ENCODE measurements at regions of chr17 and their contacts with region 1.

Region 1: GRCh38 chr17:75046582-75047289 is at the starts of genes ATP5PD and KCTD2:
- DNase-seq: peak; percentile 92 to 95 (median 94)
- H3K4me3 ChIP-seq: peak within 1 kb of the TSS; percentile 62 to 96
- H3K4me3 Mint-ChIP-seq: peak within 1 kb of the TSS; percentile 95 to 100 (median 97)
- H3K27ac ChIP-seq: peak within 1 kb of the TSS; percentile 85
- H3K27ac Mint-ChIP-seq: peak within 1 kb of the TSS; percentile 96 to 98 (median 97)
- H3K4me1 ChIP-seq: peaks cover 30% of the 10 kb centered on the region
- H3K4me1 Mint-ChIP-seq: peaks cover 25 to 63% (median 40%) of the 10 kb centered on the region in 4 donors
- H3K27me3 ChIP-seq: no peaks in the 10 kb centered on the region
- H3K27me3 Mint-ChIP-seq: no peaks in the 10 kb centered on the region
- total RNA-seq, gene ATP5PD: 167 to 171 TPM
- total RNA-seq, gene KCTD2: 31.1 to 31.7 TPM

Region 2: DNA sequence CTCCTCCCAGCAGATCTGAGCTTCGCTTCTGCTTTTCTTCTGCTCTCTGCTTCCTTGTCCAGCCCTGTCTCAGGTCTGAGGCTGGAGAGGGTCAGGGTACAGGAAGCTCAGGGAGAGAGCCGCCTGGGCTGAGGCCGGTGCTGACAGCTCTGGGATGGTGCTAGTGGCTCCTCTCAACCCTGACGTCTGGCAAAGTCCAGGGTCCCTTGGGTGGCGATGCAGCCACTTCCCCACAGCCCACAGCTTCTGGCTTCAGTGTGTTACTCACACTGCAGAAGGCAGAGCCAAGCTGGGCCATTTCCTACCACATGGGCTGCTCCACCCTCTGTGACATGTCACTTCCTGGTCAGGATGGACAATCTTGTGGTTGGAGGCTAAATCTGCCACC is 500.9 kb before region 1 on chr17 and contains the start of gene CD300C:
- CTCF ChIA-PET with region 1: no interaction called
- POLR2A ChIA-PET with region 1: no interaction called
- intact Hi-C with region 1: no loop called
- DNase-seq: no peak
- H3K4me3 ChIP-seq: no peak within 1 kb of the TSS
- H3K4me3 Mint-ChIP-seq: no peak within 1 kb of the TSS
- H3K27ac ChIP-seq: no peak within 1 kb of the TSS
- H3K27ac Mint-ChIP-seq: peak within 1 kb of the TSS in 2 of 7 donors; percentile 51 to 64
- H3K4me1 ChIP-seq: no peaks in the 10 kb centered on the region
- H3K4me1 Mint-ChIP-seq: peaks cover 0 to 8% (median 4%) of the 10 kb centered on the region in 4 donors
- H3K27me3 ChIP-seq: no peaks in the 10 kb centered on the region
- H3K27me3 Mint-ChIP-seq: peaks cover 2 to 3% of the 10 kb centered on the region in 2 donors
- total RNA-seq, gene CD300C: not detected

Region 3: DNA sequence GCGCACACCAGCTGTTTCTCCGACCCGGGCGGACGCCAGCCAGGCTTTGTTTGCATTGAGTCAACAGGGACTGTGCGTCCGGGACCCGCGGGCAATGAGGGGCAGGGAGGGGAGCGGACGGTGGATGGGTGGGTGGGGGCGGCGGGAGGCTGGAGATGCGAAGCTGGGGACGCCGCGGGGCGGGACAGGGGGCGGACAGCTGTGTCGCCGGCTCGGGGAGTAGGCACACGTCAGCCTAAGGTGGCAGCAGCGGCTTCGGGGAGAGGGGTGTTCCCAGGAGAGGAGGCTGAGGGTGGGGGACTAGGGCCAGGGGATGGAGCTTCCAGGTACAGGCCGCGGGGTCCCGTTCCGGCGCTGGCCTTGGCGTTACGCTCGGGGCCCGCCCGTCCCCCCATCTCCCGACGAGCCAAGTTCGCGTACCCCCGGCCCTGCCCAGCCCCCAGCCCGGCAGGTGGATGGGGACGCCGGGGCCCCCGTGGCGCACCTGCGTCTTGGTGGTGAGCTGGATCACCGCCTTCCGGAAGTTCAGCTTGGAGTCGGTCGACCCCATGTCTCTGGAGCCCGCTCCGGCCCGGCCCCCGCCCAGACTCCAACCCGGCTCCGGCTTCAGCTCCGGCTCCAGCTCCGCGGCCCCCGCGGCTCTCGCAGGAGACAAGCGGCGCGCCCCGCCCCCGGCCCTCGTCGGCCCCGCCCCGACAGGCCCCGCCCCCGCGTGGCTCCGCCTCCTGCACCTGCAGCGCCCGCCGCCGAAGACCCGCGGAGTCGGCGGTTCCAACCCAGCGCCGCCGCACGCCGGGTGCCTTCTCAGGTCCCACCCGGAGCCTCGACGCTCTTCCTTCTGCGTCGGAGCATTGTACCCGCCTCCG is 74.4 kb before region 1 on chr17 and contains the start of gene HID1:
- CTCF ChIA-PET with region 1: no interaction called
- POLR2A ChIA-PET with region 1: no interaction called
- intact Hi-C with region 1: loop called (anchors 2 kb)
- DNase-seq: peak; percentile 71 to 75 (median 74)
- H3K4me3 ChIP-seq: peak within 1 kb of the TSS; percentile 36 to 62
- H3K4me3 Mint-ChIP-seq: peak within 1 kb of the TSS; percentile 81 to 92 (median 86)
- H3K27ac ChIP-seq: peak within 1 kb of the TSS; percentile 32
- H3K27ac Mint-ChIP-seq: peak within 1 kb of the TSS; percentile 57 to 90 (median 74)
- H3K4me1 ChIP-seq: peaks cover 15% of the 10 kb centered on the region
- H3K4me1 Mint-ChIP-seq: peaks cover 4 to 11% (median 7%) of the 10 kb centered on the region in 4 donors
- H3K27me3 ChIP-seq: no peaks in the 10 kb centered on the region
- H3K27me3 Mint-ChIP-seq: peaks cover 3 to 5% of the 10 kb centered on the region in 2 donors
- total RNA-seq, gene HID1: 17.5 to 19.5 TPM

Region 4: GRCh38 chr17:75059369-75060345 is 12.9 kb after region 1 on chr17:
- CTCF ChIA-PET with region 1: interaction called, 16 read pairs
- POLR2A ChIA-PET with region 1: interaction called, 6 read pairs
- intact Hi-C with region 1: no loop called
- DNase-seq: peak in 2 of 5 donors; percentile 20 to 26
- H3K4me3 ChIP-seq: no peak overlapping the region
- H3K4me3 Mint-ChIP-seq: no peak overlapping the region
- H3K27ac ChIP-seq: no peak overlapping the region
- H3K27ac Mint-ChIP-seq: peak overlapping the region in 2 of 7 donors; percentile 61 to 78
- H3K4me1 ChIP-seq: no peaks in the 10 kb centered on the region
- H3K4me1 Mint-ChIP-seq: peaks cover 0 to 18% (median 8%) of the 10 kb centered on the region in 4 donors
- H3K27me3 ChIP-seq: no peaks in the 10 kb centered on the region
- H3K27me3 Mint-ChIP-seq: no peaks in the 10 kb centered on the region

Region 5: DNA sequence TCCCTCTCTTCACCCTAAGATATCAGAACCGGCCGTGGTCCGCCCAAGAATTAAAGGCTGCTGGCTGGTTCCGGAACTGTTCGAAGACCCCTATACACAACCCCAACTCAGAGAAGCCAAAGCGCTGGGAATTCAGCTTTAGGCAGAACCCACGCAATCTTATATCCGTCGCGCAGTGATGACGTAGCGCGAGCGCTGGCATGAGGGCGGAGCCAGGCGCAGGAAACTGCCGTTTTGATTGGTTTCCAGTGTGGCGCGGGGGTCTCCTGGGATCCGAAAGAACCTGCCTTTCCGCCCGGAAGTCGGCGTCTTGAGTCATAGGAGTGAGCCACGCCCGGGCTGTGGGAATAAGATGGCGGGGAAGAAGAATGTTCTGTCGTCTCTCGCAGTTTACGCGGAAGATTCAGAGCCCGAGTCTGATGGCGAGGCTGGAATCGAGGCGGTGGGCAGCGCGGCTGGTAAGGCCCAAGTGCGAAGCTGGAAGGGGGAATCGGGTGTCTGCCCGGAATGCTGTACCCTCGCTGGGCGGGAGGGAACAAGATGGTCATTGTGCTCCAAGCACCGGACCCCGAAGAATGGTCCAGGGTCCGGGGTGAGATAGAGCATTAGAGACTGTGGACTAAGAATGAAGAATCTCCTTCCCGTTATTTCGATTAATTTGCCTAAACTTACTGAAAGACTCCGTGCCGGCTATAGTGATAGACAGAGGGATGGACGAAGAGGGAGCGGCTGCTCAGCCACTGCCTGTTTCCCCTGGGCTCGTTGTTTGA is 620.5 kb after region 1 on chr17 and contains the starts of genes RECQL5 and SAP30BP:
- CTCF ChIA-PET with region 1: no interaction called
- POLR2A ChIA-PET with region 1: no interaction called
- intact Hi-C with region 1: loop called (anchors 2 kb)
- DNase-seq: peak; percentile 94 to 98 (median 96)
- H3K4me3 ChIP-seq: peak within 1 kb of the TSS; percentile 72 to 85
- H3K4me3 Mint-ChIP-seq: peak within 1 kb of the TSS; percentile 21 to 74 (median 54)
- H3K27ac ChIP-seq: peak within 1 kb of the TSS; percentile 95
- H3K27ac Mint-ChIP-seq: peak within 1 kb of the TSS in 5 of 7 donors; percentile 29 to 72 (median 52)
- H3K4me1 ChIP-seq: peaks cover 25% of the 10 kb centered on the region
- H3K4me1 Mint-ChIP-seq: peaks cover 14 to 23% (median 18%) of the 10 kb centered on the region in 4 donors
- H3K27me3 ChIP-seq: no peaks in the 10 kb centered on the region
- H3K27me3 Mint-ChIP-seq: no peaks in the 10 kb centered on the region
- total RNA-seq, gene RECQL5: 58.3 to 59.1 TPM
- total RNA-seq, gene SAP30BP: 115 to 119 TPM

Measured in CD4-positive, alpha-beta memory T cell (primary cell).